ENCODE measurements at regions of chr2 and their contacts with region 1.

Region 1: DNA sequence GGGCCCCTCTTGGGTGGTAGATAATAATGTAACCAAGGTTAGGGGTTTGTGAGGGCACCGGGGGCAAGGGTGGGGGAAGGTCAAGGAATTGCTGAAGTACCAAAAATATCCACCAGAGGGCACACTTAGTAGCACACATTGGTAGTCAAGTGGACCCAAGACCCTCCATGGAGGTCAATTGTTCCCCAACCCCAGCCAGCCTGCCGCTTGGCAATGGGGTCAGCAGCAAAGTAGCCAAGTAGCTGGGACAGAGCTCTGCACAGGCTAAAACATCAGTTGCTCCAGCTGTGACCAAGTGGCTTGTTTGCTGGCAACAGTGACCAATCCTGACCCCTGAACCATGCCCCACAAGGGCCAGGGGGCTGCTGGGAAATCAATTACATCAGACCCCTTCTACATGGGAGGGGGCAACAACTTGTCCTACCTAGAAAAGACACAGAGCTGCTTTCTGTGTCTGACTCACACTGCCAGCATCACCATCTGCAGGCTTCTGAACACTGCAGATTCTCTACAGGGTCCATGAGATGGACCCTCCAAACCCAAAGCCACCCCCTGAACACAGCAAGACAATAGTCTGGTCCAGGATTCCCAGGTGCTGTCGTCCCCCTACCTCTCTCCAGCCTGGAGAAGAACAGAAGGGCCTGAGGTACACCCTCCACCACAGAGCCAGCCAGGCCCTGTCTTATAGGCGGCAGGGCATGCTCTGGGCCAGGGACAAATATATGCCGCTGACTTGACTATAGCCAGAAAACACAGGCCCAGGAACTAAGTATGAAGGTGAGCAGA is 76.0 kb downstream of the EMX1 start:
- DNase-seq: peak; percentile 64
- ATAC-seq: peak; percentile 55; the same call in 1 of the 2 replicates
- H3K4me3 ChIP-seq: no peak overlapping the region
- H3K27ac ChIP-seq: no peak overlapping the region
- H3K4me1 ChIP-seq: no peaks in the 10 kb centered on the region
- H3K27me3 ChIP-seq: no peaks in the 10 kb centered on the region
- CTCF ChIP-seq: peak; percentile 88

Region 2: DNA sequence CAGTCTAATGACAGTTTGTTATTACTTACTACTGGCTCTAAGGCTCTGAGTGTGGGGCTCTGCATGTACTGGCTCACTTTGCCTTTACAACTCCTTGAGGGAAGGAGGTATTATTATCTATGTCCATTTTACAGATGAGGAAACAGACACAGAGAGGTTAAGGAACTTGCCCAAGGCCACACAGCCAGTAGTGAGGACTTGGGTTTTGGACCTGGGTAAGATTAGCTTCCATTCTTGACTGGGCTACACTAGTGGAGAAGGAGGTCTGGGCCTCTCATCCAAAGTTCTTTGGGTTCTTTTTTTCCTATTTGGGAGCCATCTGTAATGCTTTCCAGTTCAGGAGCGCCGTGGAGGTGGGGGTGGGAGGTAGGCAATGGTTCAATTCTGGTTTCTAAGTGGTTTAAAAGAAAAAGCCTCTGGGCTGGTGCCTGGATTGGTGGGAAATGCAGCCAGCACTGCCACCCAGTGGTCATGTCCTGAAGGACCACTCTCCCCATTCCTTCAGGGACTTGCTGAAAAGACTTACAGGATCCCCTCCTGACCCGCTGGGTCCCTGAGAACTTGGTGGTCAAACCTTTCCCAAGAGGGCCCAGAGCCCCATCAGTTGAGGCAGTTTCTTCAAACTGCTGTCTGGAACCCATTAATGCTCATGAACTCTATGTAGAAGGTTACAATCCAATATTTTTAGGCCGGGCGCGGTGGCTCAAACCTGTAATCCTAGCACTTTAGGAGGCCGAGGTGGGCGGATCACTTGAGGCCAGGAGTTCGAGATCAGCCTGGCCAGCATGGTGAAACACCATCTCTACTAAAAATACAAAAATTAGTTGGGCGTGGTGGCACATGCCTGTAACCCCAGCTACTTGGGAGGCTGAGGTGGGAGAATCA is 170.4 kb after region 1 on chr2:
- CTCF ChIA-PET with region 1: no interaction called
- POLR2A ChIA-PET with region 1: no interaction called
- intact Hi-C with region 1: loop called (anchors 1 kb)
- DNase-seq: peak; percentile 81
- ATAC-seq: peak; percentile 96
- H3K4me3 ChIP-seq: no peak overlapping the region
- H3K27ac ChIP-seq: no peak overlapping the region
- H3K4me1 ChIP-seq: no peaks in the 10 kb centered on the region
- H3K27me3 ChIP-seq: no peaks in the 10 kb centered on the region
- CTCF ChIP-seq: peak; percentile 85